ENCODE measurements at regions of chr18 and their contacts with region 1.

Region 1: DNA sequence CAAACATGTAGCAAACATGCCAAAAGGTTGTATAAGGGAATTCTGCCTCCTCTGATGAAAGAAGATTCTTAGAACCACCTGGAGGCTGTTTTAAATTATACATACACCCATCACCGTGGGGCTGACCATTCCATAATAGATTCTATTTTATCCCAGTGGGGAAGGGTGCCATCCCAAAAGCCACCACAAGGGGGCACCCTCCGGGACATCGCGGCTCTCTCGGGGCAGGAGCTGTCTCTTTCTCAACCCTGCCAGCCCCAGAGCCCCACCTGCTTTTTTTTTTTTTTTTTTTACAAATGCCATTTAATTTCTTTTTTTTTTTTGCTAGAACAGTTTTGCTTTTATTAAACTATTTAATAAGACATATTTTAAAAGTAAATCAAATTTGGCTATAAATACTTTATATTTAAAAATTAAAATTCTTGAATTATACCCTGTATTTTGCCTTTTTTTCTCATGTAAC is 8.6 kb upstream of the MTCL1 start:
- DNase-seq: peak; percentile 81
- ATAC-seq: peak; percentile 92
- H3K4me3 Mint-ChIP-seq: no peak overlapping the region
- H3K27ac Mint-ChIP-seq: no peak overlapping the region
- H3K4me1 Mint-ChIP-seq: no peaks in the 10 kb centered on the region
- H3K27me3 Mint-ChIP-seq: peaks cover 10% of the 10 kb centered on the region
- CTCF ChIP-seq: peak; percentile 89

Region 2: GRCh38 chr18:8685141-8685913 is 11.5 kb before region 1 on chr18:
- CTCF ChIA-PET with region 1: interaction called, 11 read pairs
- POLR2A ChIA-PET with region 1: interaction called, 3 read pairs
- intact Hi-C with region 1: no loop called
- DNase-seq: no peak
- ATAC-seq: no peak
- H3K4me3 Mint-ChIP-seq: no peak overlapping the region
- H3K27ac Mint-ChIP-seq: no peak overlapping the region
- H3K4me1 Mint-ChIP-seq: no peaks in the 10 kb centered on the region
- H3K27me3 Mint-ChIP-seq: peaks cover 4% of the 10 kb centered on the region
- CTCF ChIP-seq: no peak

Region 3: GRCh38 chr18:8706764-8707555 is 10.2 kb after region 1 on chr18:
- CTCF ChIA-PET with region 1: interaction called, 11 read pairs
- POLR2A ChIA-PET with region 1: no interaction called
- intact Hi-C with region 1: no loop called
- DNase-seq: peak; percentile 4
- ATAC-seq: no peak
- H3K4me3 Mint-ChIP-seq: peak overlapping the region; percentile 77
- H3K27ac Mint-ChIP-seq: no peak overlapping the region
- H3K4me1 Mint-ChIP-seq: peaks cover 11% of the 10 kb centered on the region
- H3K27me3 Mint-ChIP-seq: peaks cover 51% of the 10 kb centered on the region
- CTCF ChIP-seq: no peak

Region 4: DNA sequence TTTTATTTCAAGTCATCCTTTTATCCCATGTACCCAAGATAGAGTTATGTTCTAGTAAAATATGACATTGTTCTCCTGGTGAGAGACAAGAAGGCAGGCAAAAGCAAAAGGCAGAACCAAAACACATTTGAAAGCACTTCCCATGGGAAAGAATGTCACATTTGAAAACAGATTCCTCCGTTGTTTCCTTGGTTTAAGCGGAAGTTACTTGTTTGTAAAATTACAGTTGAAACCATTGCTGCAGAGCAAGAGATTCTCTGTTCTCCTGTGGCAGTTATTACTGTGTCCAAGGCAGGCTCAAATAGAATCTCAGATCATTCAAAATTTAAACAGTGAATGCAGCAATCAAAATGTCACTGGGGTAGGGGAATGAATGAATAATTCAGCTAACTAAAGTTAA is 158.2 kb after region 1 on chr18:
- CTCF ChIA-PET with region 1: no interaction called
- POLR2A ChIA-PET with region 1: no interaction called
- intact Hi-C with region 1: no loop called
- DNase-seq: no peak
- ATAC-seq: no peak
- H3K4me3 Mint-ChIP-seq: no peak overlapping the region
- H3K27ac Mint-ChIP-seq: no peak overlapping the region
- H3K4me1 Mint-ChIP-seq: no peaks in the 10 kb centered on the region
- H3K27me3 Mint-ChIP-seq: peaks cover 2% of the 10 kb centered on the region
- CTCF ChIP-seq: no peak

Region 5: GRCh38 chr18:8982416-8983184 is 285.8 kb after region 1 on chr18:
- CTCF ChIA-PET with region 1: interaction called, 46 read pairs
- POLR2A ChIA-PET with region 1: interaction called, 3 read pairs
- intact Hi-C with region 1: no loop called
- DNase-seq: peak; percentile 52
- ATAC-seq: peak; percentile 58
- H3K4me3 Mint-ChIP-seq: no peak overlapping the region
- H3K27ac Mint-ChIP-seq: no peak overlapping the region
- H3K4me1 Mint-ChIP-seq: no peaks in the 10 kb centered on the region
- H3K27me3 Mint-ChIP-seq: no peaks in the 10 kb centered on the region
- CTCF ChIP-seq: no peak

Region 6: DNA sequence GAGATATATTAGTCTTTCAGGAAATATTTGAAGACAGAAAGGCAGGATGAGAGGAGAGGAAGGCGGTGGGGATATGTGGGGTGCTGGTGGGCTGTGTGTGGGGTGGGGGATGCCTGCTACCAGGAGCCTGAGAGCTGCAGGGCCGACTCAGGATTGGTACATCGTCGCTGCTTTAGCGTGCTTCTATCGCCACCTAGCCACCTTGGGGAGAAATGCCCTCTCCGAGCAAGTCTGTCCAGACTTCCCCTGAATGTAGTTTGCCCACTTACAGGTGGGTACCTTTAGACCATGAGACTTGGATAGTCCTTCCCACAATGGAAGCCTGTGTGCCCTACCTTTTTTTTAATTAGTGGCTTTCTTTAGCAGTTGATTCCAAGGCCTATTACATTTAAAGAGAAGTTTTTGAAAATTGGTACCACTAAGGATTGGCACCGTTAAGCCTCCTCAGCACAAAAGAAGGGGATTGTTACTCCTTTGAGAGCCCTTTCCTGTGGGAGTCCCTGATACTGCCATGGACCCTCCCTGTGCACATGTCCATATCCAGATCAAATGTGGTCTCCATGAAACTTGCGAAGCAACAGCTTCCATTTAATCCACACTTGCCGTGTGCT is 291.6 kb after region 1 on chr18:
- CTCF ChIA-PET with region 1: interaction called, 46 read pairs
- POLR2A ChIA-PET with region 1: no interaction called
- intact Hi-C with region 1: loop called (anchors 2 kb)
- DNase-seq: peak; percentile 65
- ATAC-seq: peak; percentile 74
- H3K4me3 Mint-ChIP-seq: no peak overlapping the region
- H3K27ac Mint-ChIP-seq: no peak overlapping the region
- H3K4me1 Mint-ChIP-seq: no peaks in the 10 kb centered on the region
- H3K27me3 Mint-ChIP-seq: peaks cover 6% of the 10 kb centered on the region
- CTCF ChIP-seq: peak; percentile 80